ENCODE measurements at regions of chr10 and their contacts with region 1.

Region 1: DNA sequence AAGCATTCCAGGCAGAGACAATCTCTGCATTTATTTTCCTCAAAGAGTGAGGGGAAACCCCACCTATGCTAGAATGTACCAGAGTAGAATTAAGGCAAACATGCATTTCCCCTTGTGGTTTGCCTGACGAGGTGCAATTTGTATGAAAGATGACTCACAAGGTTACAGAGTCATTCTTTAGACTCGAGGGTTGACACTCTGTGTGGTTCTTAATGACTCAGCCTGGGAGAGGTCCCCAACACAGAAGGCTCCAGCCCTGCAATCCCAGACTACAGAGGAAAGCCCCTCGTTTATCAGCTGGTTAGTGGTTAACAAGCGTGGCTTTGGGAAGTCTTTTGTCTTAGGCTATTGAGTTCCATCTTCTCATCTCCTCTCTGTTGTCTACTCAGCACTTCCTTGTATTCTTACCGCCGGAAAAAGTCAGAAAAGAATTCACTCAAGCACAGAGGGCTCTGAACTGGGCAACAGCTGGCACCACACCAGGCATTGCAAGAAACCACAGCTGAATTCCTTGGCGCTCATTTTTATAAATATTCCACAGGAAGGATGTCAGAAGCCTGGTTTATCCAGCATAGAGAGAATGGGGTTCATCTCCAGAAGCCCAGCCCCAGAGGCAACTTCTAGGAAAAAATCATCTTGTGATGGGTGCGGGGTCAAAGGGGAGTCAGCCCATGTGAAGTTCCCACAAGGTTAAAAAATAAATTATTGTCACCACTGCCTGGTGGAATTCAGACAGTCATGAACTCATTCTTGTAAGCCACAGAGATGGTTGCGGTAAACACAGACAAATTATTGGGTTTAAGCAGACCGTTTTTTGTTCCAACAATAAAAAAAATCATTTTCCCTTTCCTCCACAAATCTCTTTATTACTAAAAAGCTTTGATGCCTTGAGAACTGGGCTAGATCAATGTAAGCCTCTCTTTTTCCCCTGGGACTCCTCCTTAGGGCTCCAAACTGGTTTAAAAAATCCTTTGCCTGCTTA is 24.5 kb upstream of the SVIL start:
- DNase-seq: peak; percentile 41 to 70
- H3K4me3 ChIP-seq: no peak overlapping the region
- H3K4me3 Mint-ChIP-seq: peak overlapping the region; percentile 40
- H3K27ac Mint-ChIP-seq: peak overlapping the region; percentile 70
- H3K4me1 ChIP-seq: 0 out of 2 replicates have a peak, but pooled peaks cover 6% of the 10 kb centered on the region
- H3K4me1 Mint-ChIP-seq: peaks cover 26% of the 10 kb centered on the region
- H3K27me3 ChIP-seq: no peaks in the 10 kb centered on the region
- H3K27me3 Mint-ChIP-seq: no peaks in the 10 kb centered on the region
- CTCF ChIP-seq: peak in 1 of 2 experiments; percentile 36

Region 2: DNA sequence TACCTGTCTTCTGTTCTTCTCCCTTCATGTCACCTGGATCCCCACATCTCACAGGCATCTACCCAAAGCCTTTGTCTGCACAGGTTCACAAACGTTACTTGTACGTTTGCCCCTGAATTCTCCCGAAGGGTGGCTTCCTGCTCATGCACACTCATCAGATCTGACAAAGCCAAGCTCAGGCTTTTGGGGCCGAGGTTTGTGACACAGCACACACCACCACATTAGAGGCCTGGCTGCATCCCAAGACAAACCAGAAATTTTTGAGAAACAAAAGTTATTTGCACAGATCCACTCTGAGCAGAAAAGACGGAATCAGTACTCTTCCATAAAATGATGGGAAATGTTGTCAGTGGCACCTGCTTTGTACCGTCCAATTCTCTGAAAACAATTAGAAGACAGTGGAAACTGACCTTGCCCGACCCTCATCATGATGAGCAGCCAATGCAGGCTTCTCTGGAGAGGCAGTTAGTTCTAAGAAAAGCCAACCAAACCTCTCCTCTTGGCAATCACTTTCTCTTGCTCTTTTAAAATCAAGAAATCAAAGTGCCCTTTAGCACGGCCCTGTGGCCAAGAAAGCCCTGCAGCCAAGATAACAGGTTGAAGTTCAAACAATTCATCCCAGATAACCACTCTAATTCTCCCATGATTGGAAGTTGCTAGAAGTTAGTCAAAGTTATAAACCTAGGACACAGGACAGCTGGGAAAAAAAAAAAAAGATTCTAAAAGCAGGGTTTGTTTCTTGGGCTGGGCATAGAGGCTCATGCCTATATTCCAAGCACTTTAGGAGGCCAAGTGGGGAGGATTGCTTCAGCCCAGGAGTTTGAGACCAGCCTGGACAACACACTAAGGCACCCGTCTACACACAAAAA is 10.9 kb before region 1 on chr10:
- CTCF ChIA-PET with region 1: interaction called, 3 read pairs
- POLR2A ChIA-PET with region 1: no interaction called
- intact Hi-C with region 1: loop called (anchors 1 kb)
- DNase-seq: peak; percentile 46 to 56
- H3K4me3 ChIP-seq: no peak overlapping the region
- H3K4me3 Mint-ChIP-seq: no peak overlapping the region
- H3K27ac Mint-ChIP-seq: peak overlapping the region; percentile 53
- H3K4me1 ChIP-seq: peaks cover 32% of the 10 kb centered on the region
- H3K4me1 Mint-ChIP-seq: peaks cover 29% of the 10 kb centered on the region
- H3K27me3 ChIP-seq: no peaks in the 10 kb centered on the region
- H3K27me3 Mint-ChIP-seq: no peaks in the 10 kb centered on the region
- CTCF ChIP-seq: no peak

Region 3: DNA sequence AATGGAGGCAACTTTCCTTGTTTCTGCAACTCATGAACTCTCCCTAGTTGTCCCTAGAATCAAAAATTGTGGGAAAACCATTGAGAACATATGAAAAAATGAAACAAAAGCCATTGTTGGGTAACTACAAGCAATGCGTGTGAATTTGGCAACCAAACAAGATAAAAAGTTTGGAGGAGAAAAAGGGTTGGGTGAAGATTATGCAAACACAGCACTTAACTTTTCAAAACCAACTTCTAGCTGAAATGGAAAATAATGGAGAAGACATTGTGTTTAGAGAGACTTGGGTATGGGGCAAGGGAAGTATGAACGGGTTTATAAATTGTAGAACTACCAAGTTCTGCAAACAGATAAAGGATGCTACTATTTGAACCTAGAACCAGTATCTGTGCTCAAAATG is 64.5 kb after region 1 on chr10:
- CTCF ChIA-PET with region 1: no interaction called
- POLR2A ChIA-PET with region 1: no interaction called
- intact Hi-C with region 1: no loop called
- DNase-seq: no peak
- H3K4me3 ChIP-seq: no peak overlapping the region
- H3K4me3 Mint-ChIP-seq: no peak overlapping the region
- H3K27ac Mint-ChIP-seq: no peak overlapping the region
- H3K4me1 ChIP-seq: peaks cover 44% of the 10 kb centered on the region
- H3K4me1 Mint-ChIP-seq: peaks cover 28% of the 10 kb centered on the region
- H3K27me3 ChIP-seq: no peaks in the 10 kb centered on the region
- H3K27me3 Mint-ChIP-seq: no peaks in the 10 kb centered on the region
- CTCF ChIP-seq: no peak

Measured in Caco-2 (cell line).